Dendritic cell treated with granulocyte-macrophage colony-stimulating factor and Interleukin-4, amounts not matched to agents 40 ng/mL and 50 ng/mL, for 4 days (primary cell): ENCODE measurements at regions of chr6 and their contacts with region 1.

Region 1: GRCh38 chr6:18595774-18596530 is 208.8 kb downstream of the RNF144B start:
- H3K4me3 Mint-ChIP-seq: no peak overlapping the region
- H3K27ac Mint-ChIP-seq: no peak overlapping the region
- H3K4me1 Mint-ChIP-seq: peaks cover 5% of the 10 kb centered on the region
- H3K27me3 Mint-ChIP-seq: no peaks in the 10 kb centered on the region

Region 2: DNA sequence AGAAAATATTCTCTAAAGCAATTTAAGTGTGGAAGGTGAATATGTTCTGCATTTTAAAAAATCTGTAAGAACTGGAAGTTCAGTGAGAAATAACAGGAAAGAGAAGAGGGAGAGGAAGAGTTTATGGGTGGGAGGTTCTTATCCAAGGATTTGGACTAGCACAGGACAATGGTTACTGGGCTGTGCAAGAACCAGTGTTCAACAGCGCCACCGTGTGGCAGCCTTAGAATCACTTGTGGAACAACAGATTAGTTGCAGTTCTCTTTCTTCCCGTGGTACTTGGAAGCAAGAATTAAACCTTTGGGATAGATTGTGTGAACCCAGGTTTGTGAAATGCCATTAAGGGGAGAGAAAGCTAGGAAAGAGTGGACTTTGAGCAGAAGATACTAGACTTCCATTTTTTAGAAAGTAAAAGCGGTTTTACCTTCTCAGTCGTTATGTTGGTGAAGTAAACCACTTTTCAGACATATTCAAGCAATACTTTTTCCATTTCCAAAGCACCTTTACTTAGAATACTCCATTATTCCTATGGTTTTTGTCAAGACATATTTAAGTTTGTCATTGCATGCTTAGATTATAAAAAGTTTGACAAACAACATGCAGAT is 227.9 kb after region 1 on chr6:
- intact Hi-C with region 1: no loop called
- H3K4me3 Mint-ChIP-seq: no peak overlapping the region
- H3K27ac Mint-ChIP-seq: no peak overlapping the region
- H3K4me1 Mint-ChIP-seq: no peaks in the 10 kb centered on the region
- H3K27me3 Mint-ChIP-seq: no peaks in the 10 kb centered on the region

Region 3: DNA sequence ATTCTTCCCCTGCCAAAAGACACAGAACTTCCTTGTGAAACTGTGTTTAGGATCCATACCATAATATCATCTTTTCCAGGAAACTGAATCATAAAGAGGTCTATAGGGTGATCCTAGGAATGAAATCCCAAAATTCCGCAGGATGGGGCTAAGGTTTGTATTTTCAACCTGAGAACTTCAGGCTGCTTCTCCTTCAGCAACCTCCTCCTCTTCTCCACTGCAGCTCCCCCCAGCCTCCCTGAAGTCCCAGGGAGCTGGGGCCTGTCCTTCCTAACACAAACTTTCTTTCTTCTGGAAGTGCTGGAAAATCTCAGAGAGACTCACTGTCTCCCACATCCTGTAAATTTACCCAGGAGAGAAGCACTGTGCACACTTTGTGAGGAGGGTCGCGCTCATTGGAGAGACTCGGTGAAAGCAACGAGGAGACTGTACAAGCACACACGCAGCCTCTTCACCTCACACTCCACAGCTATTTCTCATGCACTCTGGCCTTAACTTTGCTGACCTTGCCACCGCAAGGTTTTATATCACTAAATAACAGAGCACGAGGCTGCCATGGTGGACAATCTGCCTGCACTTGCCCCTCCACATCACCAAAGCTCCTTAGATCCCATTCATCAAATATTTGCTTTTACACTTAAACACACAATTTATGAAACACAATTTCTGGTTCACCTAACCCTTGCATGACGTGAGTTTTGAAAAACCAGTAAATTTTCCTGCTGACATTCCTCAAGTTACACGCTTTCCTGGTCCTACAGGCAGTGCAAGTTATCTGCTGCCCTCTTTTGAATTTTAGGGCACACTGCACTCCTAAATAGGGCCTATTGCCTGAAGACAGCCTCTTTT is 1255.5 kb after region 1 on chr6:
- intact Hi-C with region 1: loop called (anchors 5 kb)
- H3K4me3 Mint-ChIP-seq: no peak overlapping the region
- H3K27ac Mint-ChIP-seq: no peak overlapping the region
- H3K4me1 Mint-ChIP-seq: no peaks in the 10 kb centered on the region
- H3K27me3 Mint-ChIP-seq: peaks cover 2% of the 10 kb centered on the region

Region 4: DNA sequence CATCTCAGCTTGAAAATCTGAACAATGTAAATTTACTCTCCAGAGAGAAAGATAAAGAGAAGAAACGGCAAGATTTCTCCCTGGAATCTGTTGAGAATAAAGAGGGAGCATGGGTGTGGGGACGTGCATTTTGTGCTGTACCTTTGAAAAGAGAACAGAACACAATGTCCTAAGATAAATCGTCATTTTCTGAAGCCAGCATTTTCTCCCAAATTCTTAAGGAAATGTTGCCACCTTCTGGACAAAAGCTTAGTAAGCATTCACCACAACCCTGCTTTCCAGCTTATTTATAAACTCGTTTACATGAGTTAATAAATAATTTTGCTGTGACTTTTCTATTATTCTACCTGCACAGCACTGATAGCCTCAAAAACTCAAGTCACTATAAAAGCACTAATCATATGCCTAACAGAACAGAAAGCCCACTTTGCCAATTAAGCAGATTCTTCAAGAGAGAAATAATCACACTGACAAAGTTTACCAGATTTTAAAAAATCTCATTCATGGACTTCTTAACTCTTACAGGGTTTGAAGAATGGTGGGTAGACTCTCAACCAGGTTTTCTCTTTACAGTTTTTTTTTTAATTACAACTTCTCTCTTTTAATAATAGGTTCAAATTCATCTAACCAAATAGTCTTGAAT is 1460.5 kb after region 1 on chr6:
- intact Hi-C with region 1: loop called (anchors 5 kb)
- H3K4me3 Mint-ChIP-seq: no peak overlapping the region
- H3K27ac Mint-ChIP-seq: no peak overlapping the region
- H3K4me1 Mint-ChIP-seq: peaks cover 6% of the 10 kb centered on the region
- H3K27me3 Mint-ChIP-seq: no peaks in the 10 kb centered on the region